Activated T-helper 1 cell treated with anti-CD3 and anti-CD28 coated beads, Interleukin-12 subunit alpha, Interleukin-12 subunit beta, Interleukin-2, Interleukin-4 antibody, amounts not matched to agents 30 ng/mL and 10 ng/mL and 1 ng/mL, durations not matched to agents 14 hours and 24 hours and 36 hours (primary cell): ENCODE measurements at regions of chr2 and their contacts with region 1.

Region 1: DNA sequence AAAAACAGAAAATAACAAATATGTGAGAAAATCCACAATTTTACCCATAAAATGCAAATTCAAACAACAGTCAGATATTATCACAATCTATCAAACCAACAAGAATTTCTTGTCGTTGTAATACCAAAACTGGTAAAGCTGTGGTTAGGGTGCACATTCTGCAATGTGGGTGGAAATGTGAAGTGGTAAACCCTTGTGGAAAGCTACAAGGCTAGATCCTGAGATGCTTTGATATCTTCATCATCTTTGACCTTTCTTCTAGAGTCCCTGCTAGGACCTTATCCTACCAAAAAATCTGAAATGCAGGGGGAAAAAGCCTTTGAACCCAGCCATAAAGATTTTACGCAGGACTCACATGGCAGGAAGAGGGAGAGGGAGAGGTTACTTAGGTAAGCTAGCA is 17.2 kb upstream of the ATG16L1 start:
- DNase-seq: peak; percentile 8
- H3K4me3 Mint-ChIP-seq: peak overlapping the region; percentile 43
- H3K27ac Mint-ChIP-seq: peak overlapping the region; percentile 86
- H3K4me1 Mint-ChIP-seq: peaks cover 62% of the 10 kb centered on the region
- H3K27me3 Mint-ChIP-seq: no peaks in the 10 kb centered on the region

Region 2: GRCh38 chr2:233142355-233142897 is 91.8 kb before region 1 on chr2:
- intact Hi-C with region 1: loop called (anchors 5 kb)
- DNase-seq: peak; percentile 16
- H3K4me3 Mint-ChIP-seq: no peak overlapping the region
- H3K27ac Mint-ChIP-seq: peak overlapping the region; percentile 73
- H3K4me1 Mint-ChIP-seq: peaks cover 41% of the 10 kb centered on the region
- H3K27me3 Mint-ChIP-seq: no peaks in the 10 kb centered on the region

Region 3: DNA sequence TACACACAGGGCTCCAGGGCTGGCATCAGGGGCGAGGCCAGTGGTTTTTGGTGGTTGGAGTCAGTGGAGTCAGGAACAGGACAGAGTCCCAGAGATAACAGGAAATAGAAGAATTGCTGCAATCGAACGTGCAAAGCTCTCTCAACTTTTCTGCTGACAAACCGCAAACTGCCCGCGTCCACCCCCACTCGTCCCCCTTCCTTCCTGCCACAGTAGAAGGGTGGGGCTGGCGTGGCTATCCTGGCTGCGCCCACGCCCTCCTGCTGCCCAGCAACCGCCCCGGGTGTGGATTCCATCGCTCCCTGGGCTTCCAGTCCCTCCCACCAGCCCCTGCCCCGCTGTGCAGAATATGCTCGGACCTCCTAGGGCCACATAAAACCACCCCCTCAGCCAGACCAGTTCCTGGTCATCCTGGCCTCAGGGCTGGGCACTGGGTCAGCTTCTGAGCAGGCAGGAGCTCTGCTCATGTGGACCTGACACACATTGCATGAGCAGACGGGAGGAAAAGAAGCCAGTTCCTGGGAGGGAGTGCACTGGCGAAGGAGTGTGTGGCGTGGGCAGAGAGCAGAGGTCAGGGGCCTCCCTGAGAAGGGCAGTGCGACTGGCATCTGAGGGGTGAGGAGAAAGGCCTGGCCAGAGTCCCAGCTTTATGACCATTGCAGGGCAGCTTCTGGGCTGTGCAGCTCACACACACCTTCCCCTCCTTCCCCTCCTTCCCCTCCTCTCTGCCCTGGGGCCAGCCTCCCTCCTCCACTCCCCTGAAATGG is 68.2 kb before region 1 on chr2:
- intact Hi-C with region 1: loop called (anchors 5 kb)
- DNase-seq: no peak
- H3K4me3 Mint-ChIP-seq: no peak overlapping the region
- H3K27ac Mint-ChIP-seq: no peak overlapping the region
- H3K4me1 Mint-ChIP-seq: no peaks in the 10 kb centered on the region
- H3K27me3 Mint-ChIP-seq: no peaks in the 10 kb centered on the region